T-cell (primary cell): ENCODE measurements at regions of chr12 and their contacts with region 1.

Region 1: GRCh38 chr12:12546314-12546772 is 16.3 kb downstream of the DUSP16 start:
- DNase-seq: no peak
- ATAC-seq: no peak
- H3K4me3 ChIP-seq: no peak overlapping the region
- H3K4me3 Mint-ChIP-seq: no peak overlapping the region
- H3K27ac ChIP-seq: no peak overlapping the region
- H3K27ac Mint-ChIP-seq: no peak overlapping the region
- H3K4me1 ChIP-seq: peaks cover under 1 to 3% of the 10 kb centered on the region in 2 experiments
- H3K4me1 Mint-ChIP-seq: peaks cover 19 to 59% (median 54%) of the 10 kb centered on the region in 3 donors
- H3K27me3 ChIP-seq: no peaks in the 10 kb centered on the region
- H3K27me3 Mint-ChIP-seq: no peaks in the 10 kb centered on the region

Region 2: DNA sequence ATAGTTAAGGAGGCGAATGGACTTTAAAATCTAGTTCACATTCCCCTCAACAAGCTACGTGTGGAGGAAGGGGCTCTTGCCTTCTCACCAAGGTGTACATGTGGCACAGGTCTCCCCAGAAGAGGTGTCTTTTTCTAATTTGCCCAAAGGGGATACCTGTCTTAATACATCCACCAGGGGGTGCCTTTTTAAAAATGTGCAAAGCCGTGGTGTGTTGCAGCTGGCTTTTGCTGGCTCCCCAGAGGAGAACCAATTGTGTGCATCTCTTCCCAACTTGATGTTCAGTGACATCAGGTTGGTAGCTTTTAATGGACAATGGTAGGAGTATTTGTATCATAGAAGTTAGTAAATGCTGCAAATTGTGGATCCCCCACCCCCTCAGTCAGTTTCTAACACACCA is 99.1 kb after region 1 on chr12:
- CTCF ChIA-PET with region 1: no interaction called
- POLR2A ChIA-PET with region 1: no interaction called
- DNase-seq: peak in 32 of 35 experiments; percentile 11 to 77 (median 32)
- ATAC-seq: peak; percentile 75 to 90 (median 86)
- H3K4me3 ChIP-seq: no peak overlapping the region
- H3K4me3 Mint-ChIP-seq: no peak overlapping the region
- H3K27ac ChIP-seq: no peak overlapping the region
- H3K27ac Mint-ChIP-seq: no peak overlapping the region
- H3K4me1 ChIP-seq: peaks cover 0 to 5% of the 10 kb centered on the region in 2 experiments
- H3K4me1 Mint-ChIP-seq: peaks cover 5 to 8% (median 8%) of the 10 kb centered on the region in 3 donors
- H3K27me3 ChIP-seq: no peaks in the 10 kb centered on the region
- H3K27me3 Mint-ChIP-seq: no peaks in the 10 kb centered on the region

Region 3: DNA sequence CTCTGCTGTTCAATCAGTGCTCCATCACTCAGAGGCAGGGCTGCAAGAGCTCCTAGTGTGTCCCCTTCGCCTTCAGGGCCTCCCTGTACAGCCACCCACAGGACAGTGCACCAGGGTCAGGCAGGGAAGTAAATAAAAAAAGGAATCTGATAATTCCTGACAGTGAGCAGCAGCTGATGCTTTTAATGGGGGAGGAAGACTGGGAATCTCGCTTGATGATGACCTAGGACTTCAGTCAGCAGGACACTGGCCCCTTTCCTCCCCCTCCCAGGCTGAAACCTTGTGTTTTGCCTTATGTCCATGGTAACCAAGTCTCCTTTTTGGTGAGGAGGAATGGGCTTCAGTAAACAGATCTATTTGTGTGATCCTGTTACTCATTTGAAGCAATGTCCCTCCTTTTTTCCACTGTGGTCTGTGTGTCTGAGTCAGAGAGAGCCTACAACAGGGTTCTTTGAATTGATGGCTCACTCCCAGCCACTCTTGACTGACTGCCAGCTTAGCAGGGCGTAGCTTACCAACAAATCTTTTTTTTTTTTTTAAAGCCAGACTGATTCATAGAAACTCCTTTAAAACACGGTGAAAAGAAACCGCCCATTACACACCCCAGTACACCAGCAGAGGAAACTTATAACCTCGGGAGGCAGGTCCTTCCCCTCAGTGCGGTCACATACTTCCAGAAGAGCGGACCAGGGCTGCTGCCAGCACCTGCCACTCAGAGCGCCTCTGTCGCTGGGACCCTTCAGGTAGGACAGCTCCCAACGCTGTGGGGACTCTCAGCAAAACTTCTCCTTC is 650.0 kb after region 1 on chr12 and contains the start of gene EMP1:
- CTCF ChIA-PET with region 1: no interaction called
- POLR2A ChIA-PET with region 1: interaction called in 1 of 2 experiments, 11 read pairs
- DNase-seq: peak in 34 of 35 experiments; percentile 19 to 71 (median 42)
- ATAC-seq: peak; percentile 90 to 98 (median 96)
- H3K4me3 ChIP-seq: peak within 1 kb of the TSS; percentile 34 to 62
- H3K4me3 Mint-ChIP-seq: peak within 1 kb of the TSS; percentile 75 to 82 (median 75)
- H3K27ac ChIP-seq: peak within 1 kb of the TSS; percentile 25
- H3K27ac Mint-ChIP-seq: peak within 1 kb of the TSS; percentile 58 to 75
- H3K4me1 ChIP-seq: peaks cover 5 to 16% of the 10 kb centered on the region in 2 experiments
- H3K4me1 Mint-ChIP-seq: peaks cover 24 to 35% (median 33%) of the 10 kb centered on the region in 3 donors
- H3K27me3 ChIP-seq: no peaks in the 10 kb centered on the region
- H3K27me3 Mint-ChIP-seq: peaks cover 0 to 2% of the 10 kb centered on the region in 2 donors
- total RNA-seq, gene EMP1: 1.4 to 5.4 (median 2.8) TPM